CD14-positive monocyte (primary cell): ENCODE measurements at regions of chr2 and their contacts with region 1.

Region 1: GRCh38 chr2:38274286-38275276 is 102.5 kb downstream of the ATL2 start:
- DNase-seq: peak; percentile 68 to 81 (median 76)
- H3K4me3 ChIP-seq: no peak overlapping the region
- H3K4me3 Mint-ChIP-seq: no peak overlapping the region
- H3K27ac ChIP-seq: no peak overlapping the region
- H3K27ac Mint-ChIP-seq: peak overlapping the region in 5 of 7 donors; percentile 6 to 67 (median 21)
- H3K4me1 ChIP-seq: peaks cover 3 to 8% of the 10 kb centered on the region in 2 donors
- H3K4me1 Mint-ChIP-seq: peaks cover 5% of the 10 kb centered on the region
- H3K27me3 ChIP-seq: no peaks in the 10 kb centered on the region
- H3K27me3 Mint-ChIP-seq: peaks cover 0 to 6% (median under 1%) of the 10 kb centered on the region in 3 donors
- CTCF ChIP-seq: peak; percentile 84

Region 2: DNA sequence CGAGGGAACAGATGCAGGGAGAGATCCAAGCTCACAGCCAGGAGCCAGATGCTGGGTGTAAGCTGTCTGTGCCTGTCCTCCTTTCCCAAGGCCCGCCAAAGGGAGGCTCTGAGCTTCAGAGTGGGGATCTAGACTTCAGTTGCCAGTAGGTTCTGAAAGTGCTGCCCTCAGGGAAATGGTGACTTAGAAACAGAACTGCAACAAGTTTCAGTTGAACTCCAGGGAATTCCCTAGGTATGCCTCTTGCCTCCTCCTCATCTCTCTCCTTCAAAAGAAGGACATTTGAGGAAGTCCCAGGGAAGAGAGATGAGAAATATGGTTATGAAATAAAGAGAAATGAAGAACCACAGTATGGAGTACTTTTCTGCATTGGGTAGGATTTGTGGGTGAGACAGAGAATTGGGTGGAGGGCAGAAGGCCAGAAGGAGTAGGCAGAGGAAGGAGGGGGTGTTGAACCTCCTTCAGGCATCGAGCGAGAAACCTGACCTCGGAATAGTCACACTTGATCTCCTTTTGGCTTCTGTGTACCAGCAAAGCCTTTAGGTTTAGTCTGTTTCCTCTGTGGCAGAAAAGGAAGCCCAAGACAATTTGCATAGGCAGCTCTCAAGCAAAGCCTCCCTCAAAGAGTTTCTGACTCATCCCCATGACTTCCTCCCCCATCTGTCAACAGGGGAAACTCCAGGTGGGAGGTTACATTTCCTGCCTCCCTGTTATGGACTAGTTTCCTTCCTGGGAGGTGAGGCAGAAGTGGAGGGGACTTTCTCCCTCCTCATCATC is 884.4 kb before region 1 on chr2:
- intact Hi-C with region 1: loop called (anchors 5 to 10 kb)
- DNase-seq: peak; percentile 86 to 99 (median 90)
- H3K4me3 ChIP-seq: peak overlapping the region in 1 of 3 experiments; percentile 49
- H3K4me3 Mint-ChIP-seq: peak overlapping the region; percentile 48 to 80
- H3K27ac ChIP-seq: peak overlapping the region; percentile 77 to 83
- H3K27ac Mint-ChIP-seq: peak overlapping the region in 5 of 7 donors; percentile 94 to 99 (median 98)
- H3K4me1 ChIP-seq: peaks cover 55 to 58% of the 10 kb centered on the region in 2 donors
- H3K4me1 Mint-ChIP-seq: peaks cover 21% of the 10 kb centered on the region
- H3K27me3 ChIP-seq: no peaks in the 10 kb centered on the region
- H3K27me3 Mint-ChIP-seq: peaks cover 0 to 2% (median 2%) of the 10 kb centered on the region in 3 donors
- CTCF ChIP-seq: no peak

Region 3: GRCh38 chr2:37890893-37891495 is 383.6 kb before region 1 on chr2:
- intact Hi-C with region 1: loop called (anchors 10 kb)
- DNase-seq: peak; percentile 59 to 72 (median 68)
- H3K4me3 ChIP-seq: no peak overlapping the region
- H3K4me3 Mint-ChIP-seq: peak overlapping the region in 1 of 2 donors; percentile 6
- H3K27ac ChIP-seq: no peak overlapping the region
- H3K27ac Mint-ChIP-seq: peak overlapping the region in 2 of 7 donors; percentile 23 to 26
- H3K4me1 ChIP-seq: peaks cover 58 to 62% of the 10 kb centered on the region in 2 donors
- H3K4me1 Mint-ChIP-seq: peaks cover 61% of the 10 kb centered on the region
- H3K27me3 ChIP-seq: no peaks in the 10 kb centered on the region
- H3K27me3 Mint-ChIP-seq: peaks cover 0 to 5% (median 4%) of the 10 kb centered on the region in 3 donors
- CTCF ChIP-seq: peak; percentile 88

Region 4: DNA sequence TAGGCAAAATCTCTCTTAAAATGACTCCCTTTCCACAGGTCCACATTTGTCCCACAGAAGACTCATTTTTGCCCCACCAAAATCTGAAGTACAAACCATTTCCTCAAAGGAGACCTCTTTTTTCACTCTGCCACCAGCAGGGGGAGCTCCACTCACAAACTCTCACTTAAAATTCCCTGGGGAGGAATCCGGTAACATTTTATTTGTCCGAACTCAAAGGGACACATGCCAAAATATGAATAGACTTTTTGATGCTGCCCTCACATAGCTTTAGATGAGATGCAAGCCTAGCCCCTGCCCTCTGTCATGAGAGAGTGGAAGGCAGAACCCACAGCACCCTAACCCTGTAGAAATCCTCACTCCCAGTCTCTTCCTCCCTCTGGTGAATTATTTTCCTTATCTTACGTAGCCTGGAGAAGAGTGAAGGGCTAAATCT is 292.4 kb before region 1 on chr2:
- intact Hi-C with region 1: loop called (anchors 2 kb)
- DNase-seq: peak; percentile 36 to 65 (median 46)
- H3K4me3 ChIP-seq: peak overlapping the region in 1 of 3 experiments; percentile 19
- H3K4me3 Mint-ChIP-seq: peak overlapping the region in 1 of 2 donors; percentile 66
- H3K27ac ChIP-seq: no peak overlapping the region
- H3K27ac Mint-ChIP-seq: peak overlapping the region in 1 of 7 donors; percentile 72
- H3K4me1 ChIP-seq: peaks cover 10 to 24% of the 10 kb centered on the region in 2 donors
- H3K4me1 Mint-ChIP-seq: peaks cover 20% of the 10 kb centered on the region
- H3K27me3 ChIP-seq: no peaks in the 10 kb centered on the region
- H3K27me3 Mint-ChIP-seq: peaks cover 0 to 3% (median 2%) of the 10 kb centered on the region in 3 donors
- CTCF ChIP-seq: peak; percentile 95

Region 5: GRCh38 chr2:37993143-37993542 is 281.4 kb before region 1 on chr2:
- intact Hi-C with region 1: loop called in 1 of 2 experiments (anchors 5 kb)
- DNase-seq: no peak
- H3K4me3 ChIP-seq: no peak overlapping the region
- H3K4me3 Mint-ChIP-seq: no peak overlapping the region
- H3K27ac ChIP-seq: no peak overlapping the region
- H3K27ac Mint-ChIP-seq: no peak overlapping the region
- H3K4me1 ChIP-seq: no peaks in the 10 kb centered on the region
- H3K4me1 Mint-ChIP-seq: peaks cover 2% of the 10 kb centered on the region
- H3K27me3 ChIP-seq: no peaks in the 10 kb centered on the region
- H3K27me3 Mint-ChIP-seq: no peaks in the 10 kb centered on the region
- CTCF ChIP-seq: no peak

Region 6: DNA sequence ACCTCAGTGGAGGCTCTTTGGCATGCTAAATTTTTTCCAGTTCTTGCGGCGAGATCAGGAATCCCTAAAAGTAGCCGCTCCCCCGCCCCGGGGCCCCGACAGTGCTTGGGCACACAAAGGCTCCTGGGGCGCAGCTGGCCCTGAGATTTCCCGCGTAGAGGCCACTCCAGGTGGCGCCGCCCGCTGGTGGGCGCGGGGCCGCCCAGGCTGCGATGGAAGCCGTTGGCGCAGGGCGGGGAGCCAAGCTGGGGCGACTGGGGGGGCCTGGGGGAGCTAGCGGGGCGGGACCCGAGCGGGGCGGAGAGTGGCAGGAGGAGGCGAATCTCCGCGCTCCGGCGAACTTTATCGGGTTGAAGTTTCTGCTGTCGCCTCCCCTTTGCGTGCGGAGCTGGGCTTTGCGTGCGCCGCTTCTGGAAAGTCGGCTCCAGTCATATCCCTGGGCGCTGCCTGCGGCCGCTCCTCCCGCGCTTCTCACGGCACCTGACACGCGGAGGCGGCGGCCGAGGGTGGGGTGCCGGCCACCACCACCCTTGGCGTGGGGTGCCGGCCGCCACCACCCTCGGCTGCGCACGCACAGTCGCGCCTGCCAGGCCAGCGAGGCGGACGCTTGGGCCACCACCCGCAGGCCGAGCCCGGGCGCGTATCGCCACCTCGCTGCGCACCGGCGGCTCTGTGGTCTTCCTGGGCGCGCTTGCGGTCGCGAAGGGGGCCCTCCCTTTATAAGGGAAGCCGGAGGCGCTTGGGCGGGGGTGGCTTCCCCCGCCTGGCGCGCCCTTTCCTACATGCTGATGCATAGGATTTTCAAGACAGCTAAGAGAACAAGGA is 197.8 kb before region 1 on chr2:
- intact Hi-C with region 1: loop called (anchors 2 to 5 kb)
- DNase-seq: peak; percentile 92 to 97 (median 94)
- H3K4me3 ChIP-seq: peak overlapping the region; percentile 60 to 93 (median 84)
- H3K4me3 Mint-ChIP-seq: peak overlapping the region; percentile 94 to 98
- H3K27ac ChIP-seq: peak overlapping the region; percentile 94 to 96
- H3K27ac Mint-ChIP-seq: peak overlapping the region; percentile 80 to 94 (median 90)
- H3K4me1 ChIP-seq: peaks cover 48 to 81% of the 10 kb centered on the region in 2 donors
- H3K4me1 Mint-ChIP-seq: peaks cover 66% of the 10 kb centered on the region
- H3K27me3 ChIP-seq: peaks cover 0 to 19% of the 10 kb centered on the region in 2 donors
- H3K27me3 Mint-ChIP-seq: peaks cover 36 to 48% (median 46%) of the 10 kb centered on the region in 3 donors
- CTCF ChIP-seq: peak; percentile 46

Region 7: DNA sequence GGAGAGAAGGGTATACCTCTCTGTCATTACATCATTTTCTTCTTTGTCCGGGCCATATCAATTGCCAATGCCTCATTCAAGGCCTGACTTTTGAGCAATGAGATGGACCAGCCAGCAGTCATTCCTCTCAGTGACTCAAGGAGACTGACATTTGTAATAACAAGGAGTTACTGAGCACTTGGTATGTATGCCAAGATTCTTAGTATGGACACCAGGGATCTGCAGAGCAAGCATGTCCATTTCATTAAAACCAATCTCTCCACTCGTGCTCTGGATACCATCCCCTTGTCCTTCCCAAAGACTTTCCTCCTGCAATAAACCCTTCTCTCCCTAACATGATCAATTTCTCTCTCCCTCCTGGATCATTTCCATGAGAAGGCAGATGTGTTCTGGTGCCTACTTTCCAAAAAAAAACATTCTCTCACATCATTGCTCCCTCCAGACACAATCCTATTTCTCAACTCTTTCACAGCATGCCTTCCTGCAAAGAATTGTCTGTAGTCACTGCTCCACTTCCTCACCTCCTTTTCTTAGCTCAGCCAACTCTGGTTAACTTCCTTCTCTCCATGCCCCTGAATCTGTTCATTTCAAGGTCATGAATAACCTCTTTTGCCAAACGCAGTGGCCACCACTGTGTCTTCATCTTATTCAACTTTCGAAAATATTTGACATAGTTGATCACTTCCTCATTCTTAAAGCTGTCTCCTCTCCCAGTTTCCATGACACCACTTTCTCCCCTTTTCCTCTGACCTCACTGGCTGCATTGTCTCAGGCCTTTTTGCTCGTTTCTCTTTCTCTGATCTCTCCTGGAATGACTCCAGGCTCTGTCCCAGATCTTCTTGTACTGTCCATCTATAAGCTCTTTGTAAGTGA is 95.8 kb before region 1 on chr2:
- intact Hi-C with region 1: no loop called
- DNase-seq: peak; percentile 83 to 91 (median 88)
- H3K4me3 ChIP-seq: peak overlapping the region in 1 of 3 experiments; percentile 66
- H3K4me3 Mint-ChIP-seq: peak overlapping the region in 1 of 2 donors; percentile 72
- H3K27ac ChIP-seq: peak overlapping the region; percentile 74 to 91
- H3K27ac Mint-ChIP-seq: peak overlapping the region; percentile 93 to 98 (median 95)
- H3K4me1 ChIP-seq: peaks cover 69 to 72% of the 10 kb centered on the region in 2 donors
- H3K4me1 Mint-ChIP-seq: peaks cover 68% of the 10 kb centered on the region
- H3K27me3 ChIP-seq: no peaks in the 10 kb centered on the region
- H3K27me3 Mint-ChIP-seq: peaks cover 0 to 7% (median 0%) of the 10 kb centered on the region in 3 donors
- CTCF ChIP-seq: no peak

Region 8: DNA sequence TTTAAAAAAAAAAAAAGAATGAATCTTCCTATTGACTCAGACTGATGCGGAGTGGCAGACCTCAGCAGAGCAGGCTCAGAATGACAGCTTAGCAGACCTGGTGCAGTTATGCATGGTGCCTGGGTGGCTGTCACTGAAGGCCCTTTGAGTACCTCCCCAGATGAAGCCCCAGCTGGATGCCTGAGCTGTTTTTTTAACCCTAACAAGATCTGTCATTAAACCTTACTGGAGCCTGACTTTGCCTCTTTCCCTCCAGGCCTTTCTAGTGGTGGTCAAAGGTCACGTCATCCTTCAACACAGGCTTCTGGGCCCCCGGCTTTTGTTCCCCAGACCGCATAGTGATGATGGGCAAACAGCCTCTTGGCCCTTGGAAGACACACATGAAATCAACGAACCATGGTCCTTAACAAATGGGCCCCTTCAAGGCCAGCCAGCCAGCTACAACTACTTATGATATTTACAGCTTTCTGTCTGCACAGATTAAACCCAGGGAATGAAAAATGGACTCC is 60.3 kb before region 1 on chr2:
- intact Hi-C with region 1: no loop called
- DNase-seq: peak in 1 of 3 donors; percentile 18
- H3K4me3 ChIP-seq: no peak overlapping the region
- H3K4me3 Mint-ChIP-seq: no peak overlapping the region
- H3K27ac ChIP-seq: peak overlapping the region in 1 of 2 donors; percentile 56
- H3K27ac Mint-ChIP-seq: peak overlapping the region in 5 of 7 donors; percentile 20 to 75 (median 56)
- H3K4me1 ChIP-seq: peaks cover 29 to 41% of the 10 kb centered on the region in 2 donors
- H3K4me1 Mint-ChIP-seq: peaks cover 43% of the 10 kb centered on the region
- H3K27me3 ChIP-seq: no peaks in the 10 kb centered on the region
- H3K27me3 Mint-ChIP-seq: peaks cover 15 to 25% (median 19%) of the 10 kb centered on the region in 3 donors
- CTCF ChIP-seq: no peak